ENCODE measurements at regions of chr9 and their contacts with region 1.

Region 1: GRCh38 chr9:19379697-19380046 is 364 bp downstream of the RPS6 start:
- DNase-seq: peak; percentile 76

Region 2: GRCh38 chr9:19127881-19128500 is 251.7 kb before region 1 on chr9:
- intact Hi-C with region 1: loop called (anchors 10 kb)
- DNase-seq: no peak

Region 3: GRCh38 chr9:19184144-19184917 is 195.3 kb before region 1 on chr9:
- intact Hi-C with region 1: loop called (anchors 5 kb)
- DNase-seq: peak; percentile 84

Region 4: GRCh38 chr9:19230356-19231125 is 149.1 kb before region 1 on chr9 and contains the start of gene DENND4C:
- intact Hi-C with region 1: loop called (anchors 5 kb)
- DNase-seq: peak; percentile 91
- total RNA-seq, gene DENND4C: 21.4 TPM

Region 5: DNA sequence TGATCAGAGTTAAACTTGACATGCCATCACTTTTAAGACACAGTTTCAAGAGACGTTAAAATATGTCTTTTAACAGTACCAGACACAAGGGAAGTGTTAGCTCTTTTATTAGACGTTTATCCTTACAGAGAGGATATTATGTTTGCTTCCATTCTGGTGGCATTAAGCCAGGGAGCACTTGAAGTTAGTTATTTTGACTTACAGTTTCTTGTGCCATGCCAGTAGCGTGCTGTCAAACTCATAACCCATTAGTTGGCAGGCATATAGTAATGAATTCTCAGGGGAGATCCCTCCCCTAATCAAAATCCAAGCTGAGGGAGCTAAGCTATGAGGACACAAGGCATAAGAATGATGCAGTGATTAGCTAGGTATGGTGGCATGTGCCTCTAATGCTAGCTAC is 66.1 kb before region 1 on chr9:
- intact Hi-C with region 1: loop called (anchors 10 kb)
- DNase-seq: no peak

Region 6: GRCh38 chr9:19408693-19409400 is 29.2 kb after region 1 on chr9 and contains the start of gene ACER2:
- intact Hi-C with region 1: loop called (anchors 1 kb)
- DNase-seq: peak; percentile 96
- total RNA-seq, gene ACER2: 4.1 TPM

Region 7: DNA sequence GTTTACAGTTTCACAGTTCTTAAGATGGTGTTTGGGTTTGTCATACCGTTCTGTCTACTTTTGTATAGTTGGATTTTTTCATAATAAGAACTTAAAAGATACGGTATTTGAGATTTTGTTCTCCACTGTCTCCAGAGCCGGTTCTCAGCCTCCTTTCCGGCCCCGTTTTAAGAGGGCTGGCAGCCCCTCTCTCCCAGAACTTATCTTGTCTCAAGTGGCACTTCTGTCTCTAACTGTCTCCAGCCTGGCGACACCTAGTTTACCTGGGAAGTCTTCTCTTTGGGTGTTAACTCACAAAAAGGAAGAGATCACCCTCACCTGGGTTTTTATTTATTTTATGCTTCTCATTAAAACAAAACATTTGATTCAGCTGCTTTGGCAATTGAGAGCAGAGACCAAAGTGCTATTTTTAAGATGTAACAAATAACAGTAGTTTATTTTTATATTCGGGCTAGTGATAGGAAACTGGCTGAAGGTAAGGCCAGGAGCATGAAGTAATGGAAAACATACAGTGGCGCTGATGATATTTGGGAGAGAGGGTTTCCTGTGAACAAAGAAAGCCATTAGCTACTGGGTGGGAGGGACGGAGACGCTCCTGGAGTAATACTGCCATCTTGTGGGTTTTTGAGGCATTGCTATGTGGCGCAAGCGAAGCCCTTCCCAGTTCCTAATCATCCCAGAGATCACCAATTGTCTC is 77.5 kb after region 1 on chr9:
- intact Hi-C with region 1: loop called (anchors 5 kb)
- DNase-seq: no peak

Region 8: DNA sequence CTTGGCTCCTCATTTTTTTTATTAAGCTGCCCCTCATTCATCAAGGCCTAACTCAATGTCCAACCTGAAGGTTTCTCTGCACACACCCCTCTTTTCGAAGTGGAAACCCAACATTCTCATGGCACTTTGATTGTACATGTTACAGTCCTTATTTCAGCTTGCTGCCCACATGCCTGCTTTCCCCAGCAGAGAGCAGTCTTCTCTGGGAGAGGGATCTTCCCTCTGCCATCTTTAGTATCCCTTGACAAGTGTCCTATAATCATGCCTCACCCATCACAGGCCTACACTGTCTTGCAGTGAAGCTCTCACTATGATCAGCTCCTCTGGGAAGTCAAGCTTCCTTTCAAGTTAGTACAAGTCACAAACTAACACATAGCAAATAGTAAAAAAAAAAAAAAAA is 204.2 kb after region 1 on chr9:
- intact Hi-C with region 1: no loop called
- DNase-seq: no peak

Measured in cardiac septum (tissue), 1 donor.